Mammary epithelial cell (primary cell): ENCODE measurements at regions of chr12 and their contacts with region 1.

Region 1: GRCh38 chr12:31749024-31749704 is 20.3 kb upstream of the AMN1 start:
- DNase-seq: peak; percentile 100
- H3K4me3 ChIP-seq: no peak overlapping the region
- H3K27ac ChIP-seq: peak overlapping the region; percentile 91
- H3K4me1 ChIP-seq: peaks cover 15% of the 10 kb centered on the region
- H3K27me3 ChIP-seq: no peaks in the 10 kb centered on the region
- CTCF ChIP-seq: no peak

Region 2: DNA sequence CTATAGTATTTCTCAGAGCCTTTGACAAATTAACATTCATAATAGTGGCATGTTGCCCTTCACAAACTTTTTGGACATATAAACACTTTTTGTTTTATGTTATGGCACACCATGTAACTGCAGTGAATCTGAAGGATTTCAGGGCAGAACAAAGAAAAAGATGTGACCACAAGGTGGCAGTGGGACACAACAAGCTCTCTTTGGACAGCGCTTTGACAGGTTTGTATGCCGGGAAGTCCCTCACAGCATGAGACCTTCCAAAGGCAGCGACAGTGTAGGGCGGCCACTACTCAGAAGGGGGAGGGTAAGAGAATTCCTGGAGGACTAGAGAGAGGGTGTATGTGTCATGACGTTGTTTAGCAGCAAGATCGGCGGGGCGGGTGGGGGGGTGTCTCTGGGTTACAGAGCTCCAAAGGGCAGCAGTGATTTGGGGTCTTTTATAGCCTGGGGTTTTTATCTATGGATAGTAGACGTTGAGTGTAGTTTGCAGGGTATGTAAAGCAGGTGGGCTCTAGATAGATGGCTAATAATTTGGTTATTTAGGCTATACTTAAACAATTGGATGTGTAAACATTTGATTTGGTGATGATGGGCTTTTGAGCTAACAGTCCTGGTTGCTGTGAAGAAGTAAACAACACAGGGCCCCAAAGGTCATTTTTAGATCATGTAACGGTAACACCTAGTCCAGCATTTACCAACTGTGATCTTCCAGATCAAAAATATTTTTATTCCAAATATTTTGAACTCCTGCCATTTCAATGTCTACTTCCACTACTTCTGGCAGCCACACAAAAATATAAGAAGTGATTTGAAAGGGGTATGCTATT is 66.8 kb before region 1 on chr12:
- CTCF ChIA-PET with region 1: no interaction called
- dilution Hi-C with region 1: no loop called
- in situ Hi-C with region 1: no loop called
- intact Hi-C with region 1: loop called (anchors 1 kb)
- DNase-seq: peak; percentile 73
- H3K4me3 ChIP-seq: no peak overlapping the region
- H3K27ac ChIP-seq: no peak overlapping the region
- H3K4me1 ChIP-seq: no peaks in the 10 kb centered on the region
- H3K27me3 ChIP-seq: no peaks in the 10 kb centered on the region
- CTCF ChIP-seq: peak; percentile 75 to 80

Region 3: GRCh38 chr12:31728917-31729640 is 20.1 kb before region 1 on chr12 and contains the start of gene AMN1:
- CTCF ChIA-PET with region 1: no interaction called
- dilution Hi-C with region 1: no loop called
- in situ Hi-C with region 1: no loop called
- intact Hi-C with region 1: loop called (anchors 1 kb)
- DNase-seq: peak; percentile 100
- H3K4me3 ChIP-seq: peak within 1 kb of the TSS; percentile 60 to 71 (median 62)
- H3K27ac ChIP-seq: peak within 1 kb of the TSS; percentile 82
- H3K4me1 ChIP-seq: peaks cover 20% of the 10 kb centered on the region
- H3K27me3 ChIP-seq: no peaks in the 10 kb centered on the region
- CTCF ChIP-seq: no peak
- total RNA-seq, gene AMN1: 5.0 to 5.7 TPM